ENCODE measurements at regions of chr3 and their contacts with region 1.

Region 1: GRCh38 chr3:102229062-102229655 is 205.7 kb upstream of the ZPLD1 start:
- DNase-seq: peak; percentile 51 to 72 (median 60)
- H3K4me3 ChIP-seq: no peak overlapping the region
- H3K4me3 Mint-ChIP-seq: no peak overlapping the region
- H3K27ac ChIP-seq: no peak overlapping the region
- H3K27ac Mint-ChIP-seq: no peak overlapping the region
- H3K4me1 ChIP-seq: no peaks in the 10 kb centered on the region
- H3K4me1 Mint-ChIP-seq: peaks cover under 1 to 6% (median 2%) of the 10 kb centered on the region in 3 donors
- H3K27me3 ChIP-seq: no peaks in the 10 kb centered on the region
- H3K27me3 Mint-ChIP-seq: peaks cover 2 to 5% of the 10 kb centered on the region in 2 donors

Region 2: DNA sequence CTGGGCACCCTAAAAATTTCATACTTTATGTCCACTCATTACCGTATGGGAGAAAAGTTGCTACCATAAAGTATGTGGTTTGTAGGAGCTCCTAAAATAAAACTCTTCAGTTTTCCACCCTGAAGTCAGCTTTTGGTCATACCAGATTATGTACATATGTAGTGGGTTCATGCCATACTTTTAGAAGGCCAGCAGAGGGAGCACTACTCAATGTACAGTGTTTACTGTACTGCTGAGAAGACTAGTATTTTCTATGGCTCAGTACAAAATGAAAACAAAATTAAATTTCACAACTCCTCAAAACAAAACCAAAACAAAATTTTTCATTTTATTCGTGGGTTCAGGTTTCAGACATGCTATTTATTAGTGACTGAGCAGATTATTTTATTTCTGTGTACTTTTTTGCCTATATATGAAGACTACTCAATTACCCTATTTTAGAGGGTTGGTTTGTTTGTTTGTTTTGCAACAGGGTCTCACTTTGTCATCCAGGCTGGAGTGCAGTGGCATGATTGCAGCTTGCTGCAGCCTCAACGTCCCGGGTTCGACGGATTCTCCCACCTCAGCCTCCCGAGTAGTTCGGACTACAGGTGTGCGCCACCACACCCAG is 425.9 kb before region 1 on chr3:
- CTCF ChIA-PET with region 1: interaction called, 57 read pairs
- POLR2A ChIA-PET with region 1: no interaction called
- DNase-seq: peak; percentile 16 to 67 (median 63)
- H3K4me3 ChIP-seq: no peak overlapping the region
- H3K4me3 Mint-ChIP-seq: peak overlapping the region in 1 of 7 donors; percentile 13
- H3K27ac ChIP-seq: no peak overlapping the region
- H3K27ac Mint-ChIP-seq: peak overlapping the region in 7 of 8 donors; percentile 26 to 85 (median 69)
- H3K4me1 ChIP-seq: peaks cover 5% of the 10 kb centered on the region
- H3K4me1 Mint-ChIP-seq: peaks cover 19 to 35% (median 33%) of the 10 kb centered on the region in 3 donors
- H3K27me3 ChIP-seq: no peaks in the 10 kb centered on the region
- H3K27me3 Mint-ChIP-seq: no peaks in the 10 kb centered on the region

Region 3: GRCh38 chr3:101809178-101810021 is 419.8 kb before region 1 on chr3:
- CTCF ChIA-PET with region 1: interaction called, 57 read pairs
- POLR2A ChIA-PET with region 1: interaction called, 3 read pairs
- DNase-seq: peak in 4 of 5 donors; percentile 3 to 55 (median 26)
- H3K4me3 ChIP-seq: no peak overlapping the region
- H3K4me3 Mint-ChIP-seq: peak overlapping the region in 3 of 7 donors; percentile 8 to 47 (median 32)
- H3K27ac ChIP-seq: no peak overlapping the region
- H3K27ac Mint-ChIP-seq: peak overlapping the region; percentile 6 to 84 (median 64)
- H3K4me1 ChIP-seq: peaks cover 29% of the 10 kb centered on the region
- H3K4me1 Mint-ChIP-seq: peaks cover 23 to 41% (median 40%) of the 10 kb centered on the region in 3 donors
- H3K27me3 ChIP-seq: no peaks in the 10 kb centered on the region
- H3K27me3 Mint-ChIP-seq: no peaks in the 10 kb centered on the region

Region 4: DNA sequence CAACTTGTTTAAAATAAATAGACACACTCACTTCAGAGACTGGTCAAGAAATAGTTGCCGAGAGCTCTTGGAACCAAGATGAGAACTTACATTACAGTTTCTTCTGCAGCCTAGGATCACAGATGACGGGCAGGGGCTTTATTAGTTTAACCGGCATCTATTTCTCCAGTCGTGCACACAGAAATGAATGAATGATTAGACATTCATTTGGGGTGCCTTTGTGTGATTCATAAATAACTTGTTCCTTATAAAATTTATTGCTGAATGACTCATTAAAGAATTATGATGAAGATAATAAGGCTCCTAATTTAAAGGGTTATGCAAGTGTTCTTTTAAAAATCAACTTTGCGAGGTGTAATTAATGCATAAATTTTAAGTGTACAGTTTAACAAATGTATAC is 359.0 kb before region 1 on chr3:
- CTCF ChIA-PET with region 1: no interaction called
- POLR2A ChIA-PET with region 1: no interaction called
- DNase-seq: no peak
- H3K4me3 ChIP-seq: no peak overlapping the region
- H3K4me3 Mint-ChIP-seq: no peak overlapping the region
- H3K27ac ChIP-seq: no peak overlapping the region
- H3K27ac Mint-ChIP-seq: no peak overlapping the region
- H3K4me1 ChIP-seq: no peaks in the 10 kb centered on the region
- H3K4me1 Mint-ChIP-seq: no peaks in the 10 kb centered on the region
- H3K27me3 ChIP-seq: no peaks in the 10 kb centered on the region
- H3K27me3 Mint-ChIP-seq: no peaks in the 10 kb centered on the region

Region 5: GRCh38 chr3:102536456-102536855 is 307.3 kb after region 1 on chr3:
- CTCF ChIA-PET with region 1: interaction called, 16 read pairs
- POLR2A ChIA-PET with region 1: no interaction called
- DNase-seq: peak in 2 of 5 donors; percentile 3 to 11
- H3K4me3 ChIP-seq: no peak overlapping the region
- H3K4me3 Mint-ChIP-seq: no peak overlapping the region
- H3K27ac ChIP-seq: no peak overlapping the region
- H3K27ac Mint-ChIP-seq: peak overlapping the region in 1 of 8 donors; percentile 5
- H3K4me1 ChIP-seq: no peaks in the 10 kb centered on the region
- H3K4me1 Mint-ChIP-seq: peaks cover 6 to 8% (median 7%) of the 10 kb centered on the region in 3 donors
- H3K27me3 ChIP-seq: no peaks in the 10 kb centered on the region
- H3K27me3 Mint-ChIP-seq: peaks cover 5 to 11% of the 10 kb centered on the region in 2 donors